ENCODE measurements at regions of chr15 and their contacts with region 1.

Region 1: DNA sequence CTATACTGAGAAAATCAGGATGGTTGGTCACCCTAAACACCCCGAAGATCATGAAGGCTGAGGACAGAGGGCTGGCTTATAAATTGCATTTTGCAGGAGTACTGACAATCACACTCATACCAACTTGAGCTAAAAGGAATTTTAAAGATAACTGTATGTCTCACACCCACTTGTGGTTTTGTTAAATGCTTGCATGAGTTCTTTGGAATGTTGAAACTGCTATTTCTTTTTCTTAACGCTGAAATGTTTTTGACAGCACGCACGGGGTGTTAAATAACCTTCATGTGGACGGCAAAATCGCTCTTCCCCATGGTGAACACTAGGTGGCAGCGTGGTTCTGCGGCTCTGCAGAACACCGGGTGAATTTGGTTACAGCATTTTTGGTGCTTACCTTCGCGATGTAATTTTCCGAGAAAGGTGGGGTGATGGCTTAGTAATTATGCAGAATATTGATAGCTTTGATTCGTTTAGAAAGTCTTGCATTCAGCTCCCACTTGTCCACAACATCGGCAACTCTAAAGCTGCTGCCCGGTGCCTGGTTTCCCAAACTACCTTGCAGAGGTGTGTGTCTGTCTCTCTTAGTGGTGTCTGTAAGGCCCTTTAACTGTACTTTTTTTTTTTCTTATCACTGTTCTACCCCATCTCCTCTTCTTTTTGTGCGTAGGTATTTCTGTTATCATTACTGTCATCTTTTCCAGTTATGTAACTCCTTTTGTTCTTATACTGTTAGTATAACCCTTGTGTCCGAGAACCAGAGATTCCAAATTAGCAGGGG is 51.7 kb downstream of the ARNT2 start:
- DNase-seq: peak in 1 of 2 experiments; percentile 60
- H3K4me3 ChIP-seq: no peak overlapping the region
- H3K4me3 Mint-ChIP-seq: no peak overlapping the region
- H3K27ac Mint-ChIP-seq: no peak overlapping the region
- H3K4me1 ChIP-seq: peaks cover 7% of the 10 kb centered on the region; the same call in 1 of the 2 replicates
- H3K4me1 Mint-ChIP-seq: peaks cover 6% of the 10 kb centered on the region
- H3K27me3 ChIP-seq: no peaks in the 10 kb centered on the region
- H3K27me3 Mint-ChIP-seq: peaks cover 8% of the 10 kb centered on the region
- CTCF ChIP-seq: peak; percentile 84 to 93

Region 2: DNA sequence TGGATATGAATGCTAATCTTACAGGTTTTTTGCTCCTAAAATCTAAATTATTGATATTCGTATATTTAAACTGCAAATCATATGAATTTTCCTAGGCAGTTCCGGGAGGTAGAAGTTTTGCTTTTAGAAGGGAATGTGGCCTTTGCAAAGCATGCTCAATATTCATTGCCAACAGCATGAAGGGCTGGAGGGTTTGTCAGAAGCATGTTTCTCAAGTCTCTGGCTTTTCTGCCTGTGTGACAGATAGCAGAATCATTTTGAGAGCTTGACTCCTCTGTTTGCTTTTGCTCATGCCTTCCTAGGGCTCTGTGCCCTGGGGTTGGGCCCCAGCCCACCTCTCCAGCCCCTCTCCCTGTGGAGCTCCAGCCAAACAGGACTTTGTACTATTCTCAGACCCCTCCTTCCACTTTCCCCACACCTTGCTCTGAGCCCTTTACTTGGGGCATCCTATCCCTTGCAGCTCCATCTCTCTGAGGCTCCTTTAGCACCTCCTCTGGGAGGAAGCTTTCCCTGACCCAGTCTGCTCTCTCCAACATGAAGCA is 39.6 kb after region 1 on chr15:
- CTCF ChIA-PET with region 1: no interaction called
- POLR2A ChIA-PET with region 1: no interaction called
- intact Hi-C with region 1: loop called (anchors 5 kb)
- DNase-seq: peak; percentile 41 to 63
- H3K4me3 ChIP-seq: no peak overlapping the region
- H3K4me3 Mint-ChIP-seq: peak overlapping the region; percentile 3
- H3K27ac Mint-ChIP-seq: peak overlapping the region; percentile 76
- H3K4me1 ChIP-seq: peaks cover 34% of the 10 kb centered on the region
- H3K4me1 Mint-ChIP-seq: peaks cover 43% of the 10 kb centered on the region
- H3K27me3 ChIP-seq: no peaks in the 10 kb centered on the region
- H3K27me3 Mint-ChIP-seq: no peaks in the 10 kb centered on the region
- CTCF ChIP-seq: no peak

Region 3: DNA sequence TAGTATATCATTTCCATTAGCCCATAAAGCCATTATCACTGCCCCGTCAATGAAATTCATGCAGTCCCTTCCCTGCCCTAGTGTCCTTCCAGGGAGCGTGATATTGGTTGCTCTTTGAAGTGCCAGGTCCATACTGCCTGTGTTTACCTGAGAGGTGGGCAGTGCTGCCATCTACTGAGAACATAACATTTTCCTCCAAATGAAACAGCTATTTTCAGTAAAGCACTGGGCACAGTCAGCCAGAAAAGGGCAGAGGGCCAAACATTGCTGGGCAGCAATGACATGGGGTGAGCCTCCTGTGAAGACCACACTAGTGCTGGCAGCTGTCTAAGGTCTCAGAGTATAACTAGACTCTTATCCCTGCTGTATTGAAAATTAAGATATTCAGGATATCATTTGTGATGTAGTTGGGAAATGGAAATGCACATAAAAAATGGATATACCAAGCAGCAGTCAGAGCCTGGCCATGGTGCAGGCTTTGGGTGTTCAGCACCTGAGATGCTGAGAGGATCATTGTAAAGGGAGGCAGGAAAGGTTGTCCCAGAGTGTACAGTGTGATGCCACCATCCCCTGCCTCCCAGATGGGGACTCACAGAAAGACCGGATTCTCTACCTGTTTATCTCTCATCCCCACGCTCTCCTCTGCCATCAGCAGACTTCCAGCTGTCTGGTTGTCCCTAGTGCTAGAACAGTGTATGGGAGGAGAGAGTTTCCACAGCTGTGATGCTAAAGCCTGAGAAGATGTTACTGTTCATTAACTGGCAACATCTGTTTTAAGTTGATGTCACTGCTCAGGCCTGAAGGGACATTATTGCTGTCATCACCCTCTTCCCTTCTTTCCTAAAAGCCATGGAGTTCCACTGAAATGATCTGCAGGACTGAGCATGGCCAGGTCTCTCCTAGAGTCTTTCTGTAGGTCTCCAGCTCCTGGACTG is 57.1 kb after region 1 on chr15:
- CTCF ChIA-PET with region 1: interaction called, 14 read pairs
- POLR2A ChIA-PET with region 1: no interaction called
- intact Hi-C with region 1: loop called (anchors 1 kb)
- DNase-seq: peak in 1 of 2 experiments; percentile 29
- H3K4me3 ChIP-seq: no peak overlapping the region
- H3K4me3 Mint-ChIP-seq: no peak overlapping the region
- H3K27ac Mint-ChIP-seq: no peak overlapping the region
- H3K4me1 ChIP-seq: no peaks in the 10 kb centered on the region
- H3K4me1 Mint-ChIP-seq: no peaks in the 10 kb centered on the region
- H3K27me3 ChIP-seq: no peaks in the 10 kb centered on the region
- H3K27me3 Mint-ChIP-seq: peaks cover 3% of the 10 kb centered on the region
- CTCF ChIP-seq: peak; percentile 20

Region 4: GRCh38 chr15:80567721-80568157 is 111.9 kb after region 1 on chr15:
- CTCF ChIA-PET with region 1: interaction called, 7 read pairs
- POLR2A ChIA-PET with region 1: no interaction called
- intact Hi-C with region 1: loop called (anchors 1 kb)
- DNase-seq: peak; percentile 50 to 65
- H3K4me3 ChIP-seq: no peak overlapping the region
- H3K4me3 Mint-ChIP-seq: no peak overlapping the region
- H3K27ac Mint-ChIP-seq: no peak overlapping the region
- H3K4me1 ChIP-seq: no peaks in the 10 kb centered on the region
- H3K4me1 Mint-ChIP-seq: no peaks in the 10 kb centered on the region
- H3K27me3 ChIP-seq: no peaks in the 10 kb centered on the region
- H3K27me3 Mint-ChIP-seq: peaks cover 17% of the 10 kb centered on the region
- CTCF ChIP-seq: peak; percentile 67 to 84

Region 5: DNA sequence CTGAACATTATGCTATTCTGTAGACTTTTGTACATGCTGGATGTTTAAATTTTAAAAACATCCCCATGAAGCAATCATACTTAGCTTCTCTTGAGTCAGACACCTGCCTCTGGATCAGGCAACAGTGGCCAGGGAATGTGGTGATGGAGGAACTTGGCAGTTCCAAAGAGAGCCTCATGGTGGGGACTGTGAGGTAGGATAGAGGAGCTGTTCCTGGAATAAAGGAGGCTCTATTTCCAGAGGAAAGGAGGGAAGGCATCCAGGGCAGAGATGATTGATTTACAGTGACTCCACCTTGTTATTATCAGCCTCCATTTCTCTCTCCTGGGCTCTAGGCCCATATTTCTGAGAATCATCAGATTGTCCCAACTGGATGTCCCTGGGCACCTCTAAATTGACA is 204.3 kb after region 1 on chr15:
- CTCF ChIA-PET with region 1: no interaction called
- POLR2A ChIA-PET with region 1: no interaction called
- intact Hi-C with region 1: loop called (anchors 2 kb)
- DNase-seq: peak; percentile 61 to 63
- H3K4me3 ChIP-seq: no peak overlapping the region
- H3K4me3 Mint-ChIP-seq: no peak overlapping the region
- H3K27ac Mint-ChIP-seq: no peak overlapping the region
- H3K4me1 ChIP-seq: peaks cover 10% of the 10 kb centered on the region
- H3K4me1 Mint-ChIP-seq: peaks cover 6% of the 10 kb centered on the region
- H3K27me3 ChIP-seq: no peaks in the 10 kb centered on the region
- H3K27me3 Mint-ChIP-seq: no peaks in the 10 kb centered on the region
- CTCF ChIP-seq: peak; percentile 59 to 68

Region 6: GRCh38 chr15:80970018-80970658 is 514.3 kb after region 1 on chr15:
- CTCF ChIA-PET with region 1: interaction called, 4 read pairs
- POLR2A ChIA-PET with region 1: no interaction called
- intact Hi-C with region 1: loop called (anchors 1 kb)
- DNase-seq: peak in 1 of 2 experiments; percentile 77
- H3K4me3 ChIP-seq: no peak overlapping the region
- H3K4me3 Mint-ChIP-seq: no peak overlapping the region
- H3K27ac Mint-ChIP-seq: no peak overlapping the region
- H3K4me1 ChIP-seq: peaks cover 21% of the 10 kb centered on the region
- H3K4me1 Mint-ChIP-seq: peaks cover 14% of the 10 kb centered on the region
- H3K27me3 ChIP-seq: no peaks in the 10 kb centered on the region
- H3K27me3 Mint-ChIP-seq: no peaks in the 10 kb centered on the region
- CTCF ChIP-seq: peak; percentile 59 to 85

Measured in Caco-2 (cell line).